ENCODE measurements at regions of chr13 and their contacts with region 1.

Region 1: DNA sequence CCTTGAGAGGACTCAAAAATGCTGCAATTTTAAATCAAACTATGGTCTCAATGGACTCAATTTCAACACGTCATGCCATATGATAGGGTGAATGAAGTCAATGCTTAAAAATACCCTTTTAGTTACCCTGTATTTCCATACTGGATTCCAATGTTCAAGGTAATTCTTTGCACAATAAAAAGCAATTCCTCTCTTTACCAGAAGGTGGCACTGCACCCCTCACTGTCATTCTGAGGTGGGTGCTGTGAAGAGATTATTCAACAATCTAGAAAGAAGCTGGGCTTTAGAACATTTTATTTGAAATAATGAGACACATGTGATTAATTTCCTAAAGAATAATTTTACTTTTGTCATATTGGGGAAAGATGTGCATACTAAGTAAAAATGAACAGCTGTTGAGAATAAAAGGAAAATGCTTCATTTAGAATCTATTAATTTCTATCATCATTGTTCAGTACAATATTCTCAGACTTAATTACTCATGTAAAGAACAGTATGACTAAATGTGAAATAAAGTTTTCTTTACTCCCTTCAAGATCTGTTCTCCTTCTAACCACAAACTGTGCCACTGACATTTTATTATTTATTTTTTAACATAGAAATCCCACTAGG is 789.1 kb downstream of the GPC5 start:
- DNase-seq: peak; percentile 27
- ATAC-seq: peak; percentile 66
- H3K4me3 ChIP-seq: no peak overlapping the region
- H3K27ac ChIP-seq: no peak overlapping the region
- H3K4me1 ChIP-seq: no peaks in the 10 kb centered on the region
- H3K27me3 ChIP-seq: no peaks in the 10 kb centered on the region
- CTCF ChIP-seq: peak; percentile 79
- POLR2A ChIP-seq: no peak
- RAD21 ChIP-seq: peak; percentile 78

Region 2: GRCh38 chr13:92362717-92363116 is 175.2 kb after region 1 on chr13:
- CTCF ChIA-PET with region 1: no interaction called
- POLR2A ChIA-PET with region 1: no interaction called
- dilution Hi-C with region 1: no loop called
- in situ Hi-C with region 1: no loop called
- intact Hi-C with region 1: no loop called
- DNase-seq: peak; percentile 7
- ATAC-seq: no peak
- H3K4me3 ChIP-seq: no peak overlapping the region
- H3K27ac ChIP-seq: no peak overlapping the region
- H3K4me1 ChIP-seq: no peaks in the 10 kb centered on the region
- H3K27me3 ChIP-seq: no peaks in the 10 kb centered on the region
- CTCF ChIP-seq: no peak
- POLR2A ChIP-seq: no peak
- RAD21 ChIP-seq: no peak

Region 3: GRCh38 chr13:92530364-92530763 is 342.9 kb after region 1 on chr13:
- CTCF ChIA-PET with region 1: no interaction called
- POLR2A ChIA-PET with region 1: no interaction called
- dilution Hi-C with region 1: no loop called
- in situ Hi-C with region 1: loop called (anchors 10 kb)
- intact Hi-C with region 1: no loop called
- DNase-seq: peak; percentile 3
- ATAC-seq: no peak
- H3K4me3 ChIP-seq: no peak overlapping the region
- H3K27ac ChIP-seq: no peak overlapping the region
- H3K4me1 ChIP-seq: no peaks in the 10 kb centered on the region
- H3K27me3 ChIP-seq: no peaks in the 10 kb centered on the region
- CTCF ChIP-seq: no peak
- POLR2A ChIP-seq: no peak
- RAD21 ChIP-seq: no peak

Region 4: GRCh38 chr13:92621985-92622384 is 434.5 kb after region 1 on chr13:
- CTCF ChIA-PET with region 1: no interaction called
- POLR2A ChIA-PET with region 1: no interaction called
- dilution Hi-C with region 1: no loop called
- in situ Hi-C with region 1: no loop called
- intact Hi-C with region 1: loop called (anchors 10 kb)
- DNase-seq: no peak
- ATAC-seq: no peak
- H3K4me3 ChIP-seq: no peak overlapping the region
- H3K27ac ChIP-seq: no peak overlapping the region
- H3K4me1 ChIP-seq: no peaks in the 10 kb centered on the region
- H3K27me3 ChIP-seq: no peaks in the 10 kb centered on the region
- CTCF ChIP-seq: no peak
- POLR2A ChIP-seq: no peak
- RAD21 ChIP-seq: no peak

Region 5: GRCh38 chr13:93151277-93151676 is 963.8 kb after region 1 on chr13:
- CTCF ChIA-PET with region 1: no interaction called
- POLR2A ChIA-PET with region 1: no interaction called
- dilution Hi-C with region 1: no loop called
- in situ Hi-C with region 1: loop called (anchors 25 kb)
- intact Hi-C with region 1: no loop called
- DNase-seq: peak; percentile 91
- ATAC-seq: peak; percentile 90
- H3K4me3 ChIP-seq: no peak overlapping the region
- H3K27ac ChIP-seq: no peak overlapping the region
- H3K4me1 ChIP-seq: peaks cover 3% of the 10 kb centered on the region; the same call in 1 of the 2 replicates
- H3K27me3 ChIP-seq: no peaks in the 10 kb centered on the region
- CTCF ChIP-seq: no peak
- POLR2A ChIP-seq: no peak
- RAD21 ChIP-seq: no peak; the same call in 1 of the 2 replicates